ENCODE measurements at regions of chr15 and their contacts with region 1.

Region 1: GRCh38 chr15:53197426-53197839 is 407.3 kb upstream of the ONECUT1 start:
- DNase-seq: peak; percentile 28
- H3K4me3 Mint-ChIP-seq: no peak overlapping the region
- H3K27ac Mint-ChIP-seq: no peak overlapping the region
- H3K4me1 Mint-ChIP-seq: no peaks in the 10 kb centered on the region
- H3K27me3 Mint-ChIP-seq: peaks cover 4% of the 10 kb centered on the region

Region 2: GRCh38 chr15:52256366-52256765 is 941.1 kb before region 1 on chr15:
- intact Hi-C with region 1: loop called (anchors 5 kb)
- DNase-seq: peak; percentile 62
- H3K4me3 Mint-ChIP-seq: peak overlapping the region; percentile 47
- H3K27ac Mint-ChIP-seq: peak overlapping the region; percentile 82
- H3K4me1 Mint-ChIP-seq: peaks cover 28% of the 10 kb centered on the region
- H3K27me3 Mint-ChIP-seq: no peaks in the 10 kb centered on the region

Region 3: DNA sequence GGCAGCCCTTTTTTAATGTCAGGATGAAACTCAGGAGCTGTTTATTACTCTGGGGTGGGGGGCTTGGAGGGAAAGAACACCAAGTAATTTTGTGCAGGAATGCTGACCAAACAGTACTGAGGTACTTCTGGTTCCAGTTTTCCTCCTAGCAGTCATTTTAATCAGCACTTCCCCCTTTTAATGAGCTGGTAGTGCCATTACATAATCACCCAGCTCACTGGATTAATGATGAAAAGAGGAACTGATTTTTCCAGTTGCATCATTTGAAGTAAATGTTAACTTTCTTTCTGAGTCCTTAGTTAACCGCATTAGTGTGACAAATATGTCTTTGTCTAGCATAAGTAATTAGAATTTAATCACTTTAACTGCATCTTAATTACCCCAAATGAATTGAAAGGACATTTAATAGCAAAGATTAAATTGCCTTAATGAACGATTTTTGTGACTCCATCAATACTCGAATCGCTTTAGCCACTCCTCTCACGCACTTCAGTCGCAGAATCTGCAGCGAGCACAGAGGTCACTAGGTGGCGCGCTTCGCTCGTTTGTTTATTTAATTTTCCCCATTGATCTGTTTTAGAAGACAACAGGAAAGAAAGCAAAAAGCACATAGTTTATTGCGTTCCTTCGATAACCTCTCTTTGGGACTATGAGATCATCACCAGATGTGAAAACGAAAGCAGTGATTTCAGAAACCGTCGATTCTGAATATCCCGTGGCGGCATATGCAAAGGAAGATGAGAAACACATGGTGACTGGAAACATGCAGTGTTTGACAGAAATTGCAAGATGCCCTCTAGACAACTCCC is 417.1 kb before region 1 on chr15:
- intact Hi-C with region 1: loop called (anchors 2 kb)
- DNase-seq: peak; percentile 57
- H3K4me3 Mint-ChIP-seq: peak overlapping the region; percentile 47
- H3K27ac Mint-ChIP-seq: no peak overlapping the region
- H3K4me1 Mint-ChIP-seq: peaks cover 26% of the 10 kb centered on the region
- H3K27me3 Mint-ChIP-seq: peaks cover 72% of the 10 kb centered on the region

Region 4: DNA sequence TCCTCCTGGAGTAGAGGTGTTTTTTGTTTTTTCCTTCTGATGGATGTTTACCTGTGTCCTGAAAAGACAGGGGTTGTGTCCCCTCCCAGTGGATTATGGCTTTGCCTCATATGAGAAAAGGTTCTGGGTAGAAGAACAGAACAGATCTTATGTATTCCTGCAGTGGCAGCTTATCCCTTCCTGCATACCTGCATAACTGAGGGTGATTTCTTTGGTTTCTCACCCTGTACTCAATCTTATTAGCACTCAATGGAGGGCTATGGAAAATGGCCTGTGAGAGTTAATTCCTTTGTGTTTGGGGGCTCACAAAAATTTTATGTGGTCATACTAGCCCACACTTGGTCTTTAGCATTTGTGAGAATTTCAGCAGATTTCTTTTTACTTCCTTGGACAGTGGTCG is 74.7 kb after region 1 on chr15:
- intact Hi-C with region 1: no loop called
- DNase-seq: no peak
- H3K4me3 Mint-ChIP-seq: no peak overlapping the region
- H3K27ac Mint-ChIP-seq: no peak overlapping the region
- H3K4me1 Mint-ChIP-seq: no peaks in the 10 kb centered on the region
- H3K27me3 Mint-ChIP-seq: no peaks in the 10 kb centered on the region

Measured in activated T-helper 1 cell treated with anti-CD3 and anti-CD28 coated beads, Interleukin-12 subunit alpha, Interleukin-12 subunit beta, Interleukin-2, Interleukin-4 antibody, amounts not matched to agents 30 ng/mL and 10 ng/mL and 1 ng/mL, durations not matched to agents 14 hours and 24 hours and 36 hours (primary cell).